ENCODE measurements at regions of chr5 and their contacts with region 1.

Region 1: DNA sequence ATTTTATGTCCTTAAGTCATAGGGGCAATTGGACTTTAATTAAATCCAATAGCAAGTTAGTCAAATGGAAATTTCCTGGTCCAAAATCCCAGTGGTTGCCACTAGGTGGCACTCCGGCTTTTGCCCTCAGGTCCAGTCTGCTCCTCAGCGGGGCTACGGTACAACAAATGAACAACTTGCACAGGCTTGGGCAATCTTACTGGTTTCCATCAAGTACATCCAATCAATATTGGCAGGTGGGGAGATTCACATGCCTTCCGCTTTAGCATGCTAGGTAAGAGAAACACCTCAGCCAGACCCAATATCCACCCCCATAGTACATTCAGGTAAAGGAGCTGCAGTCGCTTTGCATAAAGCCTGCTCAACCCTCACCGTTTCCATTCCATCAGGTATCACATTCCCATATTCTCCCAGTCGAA is 6.3 kb upstream of the MXD3 start:
- DNase-seq: peak; percentile 58 to 87 (median 70)
- ATAC-seq: peak; percentile 86
- H3K4me3 ChIP-seq: no peak overlapping the region
- H3K4me3 Mint-ChIP-seq: no peak overlapping the region
- H3K27ac ChIP-seq: no peak overlapping the region
- H3K27ac Mint-ChIP-seq: no peak overlapping the region
- H3K4me1 ChIP-seq: peaks cover 16% of the 10 kb centered on the region
- H3K4me1 Mint-ChIP-seq: peaks cover 22% of the 10 kb centered on the region
- H3K27me3 ChIP-seq: no peaks in the 10 kb centered on the region
- H3K27me3 Mint-ChIP-seq: no peaks in the 10 kb centered on the region
- CTCF ChIP-seq: peak; percentile 92

Region 2: DNA sequence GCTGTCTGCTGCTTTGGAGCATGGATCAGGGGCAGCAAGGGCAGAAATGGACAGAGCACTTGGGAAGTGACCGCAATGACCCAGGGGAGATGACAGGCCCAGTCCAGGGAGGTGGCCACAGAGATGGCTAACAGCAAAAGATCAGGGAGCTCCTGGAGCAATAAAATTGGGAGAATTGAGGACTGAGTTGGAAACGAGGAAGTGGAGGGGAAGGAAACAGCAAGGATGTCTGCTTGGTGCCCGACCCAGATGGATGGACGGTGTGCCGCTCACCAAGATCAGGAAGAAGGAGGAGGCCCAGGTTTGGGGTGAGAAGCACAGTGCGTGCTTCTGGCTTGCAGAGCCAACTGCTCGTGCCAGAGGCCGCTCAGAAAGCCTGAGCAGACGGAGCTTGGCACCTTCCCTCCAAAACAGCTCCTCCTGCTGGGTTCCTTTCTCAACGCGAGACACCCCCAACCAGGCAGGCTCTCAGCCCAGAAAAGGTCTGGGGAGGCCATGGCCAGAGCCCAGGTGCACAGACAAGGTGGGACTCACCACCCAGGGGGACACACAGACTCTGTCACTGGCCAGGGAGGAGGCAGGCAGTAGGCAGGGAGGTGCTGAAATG is 64.6 kb after region 1 on chr5:
- CTCF ChIA-PET with region 1: interaction called, 7 read pairs
- POLR2A ChIA-PET with region 1: no interaction called
- intact Hi-C with region 1: loop called (anchors 1 kb)
- DNase-seq: peak in 5 of 14 experiments; percentile 41 to 69 (median 67)
- ATAC-seq: peak; percentile 87
- H3K4me3 ChIP-seq: no peak overlapping the region
- H3K4me3 Mint-ChIP-seq: no peak overlapping the region
- H3K27ac ChIP-seq: no peak overlapping the region
- H3K27ac Mint-ChIP-seq: peak overlapping the region; percentile 14
- H3K4me1 ChIP-seq: peaks cover 78% of the 10 kb centered on the region
- H3K4me1 Mint-ChIP-seq: peaks cover 27% of the 10 kb centered on the region
- H3K27me3 ChIP-seq: no peaks in the 10 kb centered on the region
- H3K27me3 Mint-ChIP-seq: no peaks in the 10 kb centered on the region
- CTCF ChIP-seq: no peak

Region 3: DNA sequence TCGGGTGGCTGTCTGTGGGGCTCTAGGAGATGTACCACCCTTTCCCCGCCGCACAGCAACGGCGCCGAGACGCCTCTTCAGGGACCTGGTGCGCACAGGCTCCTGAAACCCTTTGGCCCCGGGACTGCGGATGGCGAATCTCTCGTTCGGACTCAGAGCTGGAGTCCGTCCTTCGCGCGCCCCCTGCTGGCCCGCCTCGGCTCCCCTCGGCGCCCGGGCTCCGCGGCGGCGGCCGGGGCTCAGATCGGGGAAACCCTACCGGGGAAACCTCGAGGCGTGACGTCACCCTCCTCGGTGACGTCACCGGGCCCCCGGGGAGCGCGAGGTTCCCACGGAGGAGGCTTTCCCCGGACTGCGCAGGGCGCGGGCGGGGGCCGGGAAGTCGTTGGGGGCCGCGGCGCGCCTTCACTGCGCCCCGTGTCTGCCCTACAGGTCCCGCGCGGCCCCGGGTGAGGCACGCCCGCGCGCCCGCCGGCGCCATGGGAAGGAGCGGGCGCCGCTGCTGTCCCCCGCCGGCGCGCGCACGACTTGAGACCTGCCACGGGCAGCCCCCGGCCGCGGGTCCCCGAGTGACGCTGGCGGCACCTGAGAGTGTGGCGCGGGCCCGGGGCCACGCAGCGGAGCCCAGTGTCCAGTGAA is 136.5 kb after region 1 on chr5:
- CTCF ChIA-PET with region 1: interaction called, 3 read pairs
- POLR2A ChIA-PET with region 1: no interaction called
- intact Hi-C with region 1: loop called (anchors 1 to 5 kb)
- DNase-seq: peak; percentile 87 to 97 (median 94)
- ATAC-seq: peak; percentile 45
- H3K4me3 ChIP-seq: peak overlapping the region; percentile 71
- H3K4me3 Mint-ChIP-seq: peak overlapping the region; percentile 89
- H3K27ac ChIP-seq: peak overlapping the region; percentile 90 to 95
- H3K27ac Mint-ChIP-seq: peak overlapping the region; percentile 93
- H3K4me1 ChIP-seq: peaks cover 52% of the 10 kb centered on the region
- H3K4me1 Mint-ChIP-seq: peaks cover 43% of the 10 kb centered on the region
- H3K27me3 ChIP-seq: no peaks in the 10 kb centered on the region
- H3K27me3 Mint-ChIP-seq: no peaks in the 10 kb centered on the region
- CTCF ChIP-seq: peak; percentile 79

Region 4: DNA sequence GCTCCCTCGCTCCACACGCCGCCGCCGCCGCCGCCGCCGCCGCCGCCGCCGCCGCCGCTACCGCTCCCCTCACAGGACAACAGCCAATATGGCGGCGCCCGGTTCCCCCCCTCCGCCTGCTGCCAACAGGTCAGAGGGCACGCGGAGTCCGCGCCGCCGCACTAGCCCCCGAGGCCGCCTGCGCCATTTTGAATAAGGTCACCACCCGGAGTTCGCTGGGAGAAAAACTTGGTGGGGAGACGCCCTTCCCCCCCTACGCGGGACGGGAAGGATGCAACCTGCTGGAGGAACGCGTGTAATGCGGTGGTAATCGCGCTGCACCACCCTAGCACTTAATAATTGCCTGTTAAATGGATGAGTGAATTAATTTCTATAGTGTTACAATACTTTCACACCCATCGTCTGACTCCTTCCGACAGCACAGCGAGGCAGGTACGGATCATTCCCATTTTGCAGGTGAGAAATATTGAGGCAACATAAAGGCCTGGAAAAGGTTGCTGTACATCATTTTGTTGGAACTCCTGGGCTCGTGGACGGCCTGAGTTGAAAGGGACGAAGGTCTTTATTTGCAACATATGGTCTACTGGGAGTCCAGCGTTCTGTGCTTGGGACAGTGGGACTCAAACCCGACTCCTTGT is 236.6 kb after region 1 on chr5 and contains the start of gene FAM193B:
- CTCF ChIA-PET with region 1: no interaction called
- POLR2A ChIA-PET with region 1: no interaction called
- intact Hi-C with region 1: no loop called
- DNase-seq: peak; percentile 93 to 97 (median 95)
- ATAC-seq: peak; percentile 99
- H3K4me3 ChIP-seq: peak within 1 kb of the TSS; percentile 81
- H3K4me3 Mint-ChIP-seq: peak within 1 kb of the TSS; percentile 96
- H3K27ac ChIP-seq: no peak within 1 kb of the TSS
- H3K27ac Mint-ChIP-seq: peak within 1 kb of the TSS; percentile 71
- H3K4me1 ChIP-seq: peaks cover 30% of the 10 kb centered on the region
- H3K4me1 Mint-ChIP-seq: peaks cover 44% of the 10 kb centered on the region
- H3K27me3 ChIP-seq: no peaks in the 10 kb centered on the region
- H3K27me3 Mint-ChIP-seq: no peaks in the 10 kb centered on the region
- CTCF ChIP-seq: no peak
- total RNA-seq, gene FAM193B: 150 to 155 TPM

Measured in CD4-positive, alpha-beta T cell (primary cell).